Activated CD4-positive, alpha-beta T cell treated with anti-CD3 and anti-CD28 coated beads for 36 hours (primary cell): ENCODE measurements at regions of chr20 and their contacts with region 1.

Region 1: GRCh38 chr20:38962044-38962927 is at the start of gene DHX35:
- DNase-seq: peak; percentile 99
- ATAC-seq: peak; percentile 99
- H3K4me3 Mint-ChIP-seq: peak within 1 kb of the TSS; percentile 94
- H3K27ac Mint-ChIP-seq: peak within 1 kb of the TSS; percentile 95
- H3K4me1 Mint-ChIP-seq: peaks cover 29% of the 10 kb centered on the region
- H3K27me3 Mint-ChIP-seq: no peaks in the 10 kb centered on the region
- total RNA-seq, gene DHX35: 8.7 to 12.0 TPM

Region 2: DNA sequence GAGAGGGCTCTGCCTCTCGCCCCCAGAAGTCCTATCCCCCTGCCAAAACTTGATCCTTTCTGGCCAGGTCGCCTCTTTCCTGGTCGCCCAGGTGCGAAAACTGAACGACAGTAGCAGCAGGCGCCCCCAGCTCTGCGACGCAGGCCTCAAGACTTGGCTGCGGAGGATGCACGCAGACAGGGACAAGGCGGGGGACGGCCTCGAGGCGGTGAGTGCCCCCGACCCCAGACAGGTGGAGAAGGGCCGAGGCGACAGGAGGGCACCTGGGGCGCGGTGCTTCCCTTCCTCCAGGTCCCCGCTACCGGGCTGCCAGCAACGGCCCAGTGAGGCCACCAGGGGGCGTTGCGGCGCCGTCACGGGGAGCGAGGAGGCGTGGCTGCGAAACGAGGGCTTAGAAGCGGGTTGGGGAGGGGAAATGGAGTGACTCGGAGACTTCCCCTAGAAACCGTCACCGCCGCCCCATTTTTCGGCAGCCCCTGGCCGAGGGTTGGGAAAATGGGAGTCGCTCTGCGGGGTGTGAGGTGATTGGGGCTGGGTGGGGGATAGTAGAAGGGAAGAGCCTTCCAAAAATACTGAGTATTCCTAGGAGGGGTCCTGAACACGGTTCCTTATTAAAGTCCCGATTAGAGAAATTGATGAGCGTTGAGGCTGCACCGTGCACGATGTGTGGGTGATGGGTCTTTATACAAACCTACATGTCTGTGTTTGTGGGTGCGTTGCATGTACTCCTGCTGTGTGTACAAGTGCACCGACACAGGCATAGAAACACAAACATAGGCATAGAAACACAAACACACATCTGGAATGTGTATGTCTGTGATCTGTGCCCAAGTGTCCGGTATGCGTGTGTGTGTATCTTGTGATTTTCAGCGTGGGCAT is 316.1 kb before region 1 on chr20:
- CTCF ChIA-PET with region 1: no interaction called
- POLR2A ChIA-PET with region 1: no interaction called
- intact Hi-C with region 1: loop called in 1 of 2 experiments (anchors 1 kb)
- DNase-seq: peak; percentile 93
- ATAC-seq: peak; percentile 98
- H3K4me3 Mint-ChIP-seq: peak overlapping the region; percentile 44
- H3K27ac Mint-ChIP-seq: peak overlapping the region; percentile 41
- H3K4me1 Mint-ChIP-seq: peaks cover 7% of the 10 kb centered on the region
- H3K27me3 Mint-ChIP-seq: peaks cover 30% of the 10 kb centered on the region

Region 3: GRCh38 chr20:38805502-38805957 is 156.8 kb before region 1 on chr20 and contains the start of gene PPP1R16B:
- CTCF ChIA-PET with region 1: no interaction called
- POLR2A ChIA-PET with region 1: no interaction called
- intact Hi-C with region 1: loop called in 1 of 2 experiments (anchors 2 kb)
- DNase-seq: peak; percentile 86
- ATAC-seq: peak; percentile 79
- H3K4me3 Mint-ChIP-seq: peak within 1 kb of the TSS; percentile 86
- H3K27ac Mint-ChIP-seq: peak within 1 kb of the TSS; percentile 93
- H3K4me1 Mint-ChIP-seq: peaks cover 46% of the 10 kb centered on the region
- H3K27me3 Mint-ChIP-seq: no peaks in the 10 kb centered on the region
- total RNA-seq, gene PPP1R16B: 78.8 to 84.0 TPM

Region 4: GRCh38 chr20:38926142-38926933 is 35.9 kb before region 1 on chr20 and contains the start of gene FAM83D:
- CTCF ChIA-PET with region 1: interaction called, 19 read pairs
- POLR2A ChIA-PET with region 1: interaction called, 17 read pairs
- intact Hi-C with region 1: loop called (anchors 1 kb)
- DNase-seq: peak; percentile 99
- ATAC-seq: peak; percentile 98
- H3K4me3 Mint-ChIP-seq: peak within 1 kb of the TSS; percentile 81
- H3K27ac Mint-ChIP-seq: peak within 1 kb of the TSS; percentile 19
- H3K4me1 Mint-ChIP-seq: peaks cover 21% of the 10 kb centered on the region
- H3K27me3 Mint-ChIP-seq: no peaks in the 10 kb centered on the region
- total RNA-seq, gene FAM83D: 10.5 to 12.4 TPM

Region 5: GRCh38 chr20:39019805-39020325 is 57.6 kb after region 1 on chr20:
- CTCF ChIA-PET with region 1: no interaction called
- POLR2A ChIA-PET with region 1: no interaction called
- intact Hi-C with region 1: loop called (anchors 1 to 5 kb)
- DNase-seq: peak; percentile 74
- ATAC-seq: peak; percentile 89
- H3K4me3 Mint-ChIP-seq: no peak overlapping the region
- H3K27ac Mint-ChIP-seq: peak overlapping the region; percentile 55
- H3K4me1 Mint-ChIP-seq: peaks cover 57% of the 10 kb centered on the region
- H3K27me3 Mint-ChIP-seq: no peaks in the 10 kb centered on the region